GM13977 (cell line): ENCODE measurements at regions of chr10 and their contacts with region 1.

Region 1: GRCh38 chr10:100433253-100434240 is 29.3 kb upstream of the WNT8B start:
- DNase-seq: peak; percentile 82
- CTCF ChIP-seq: peak; percentile 98

Region 2: DNA sequence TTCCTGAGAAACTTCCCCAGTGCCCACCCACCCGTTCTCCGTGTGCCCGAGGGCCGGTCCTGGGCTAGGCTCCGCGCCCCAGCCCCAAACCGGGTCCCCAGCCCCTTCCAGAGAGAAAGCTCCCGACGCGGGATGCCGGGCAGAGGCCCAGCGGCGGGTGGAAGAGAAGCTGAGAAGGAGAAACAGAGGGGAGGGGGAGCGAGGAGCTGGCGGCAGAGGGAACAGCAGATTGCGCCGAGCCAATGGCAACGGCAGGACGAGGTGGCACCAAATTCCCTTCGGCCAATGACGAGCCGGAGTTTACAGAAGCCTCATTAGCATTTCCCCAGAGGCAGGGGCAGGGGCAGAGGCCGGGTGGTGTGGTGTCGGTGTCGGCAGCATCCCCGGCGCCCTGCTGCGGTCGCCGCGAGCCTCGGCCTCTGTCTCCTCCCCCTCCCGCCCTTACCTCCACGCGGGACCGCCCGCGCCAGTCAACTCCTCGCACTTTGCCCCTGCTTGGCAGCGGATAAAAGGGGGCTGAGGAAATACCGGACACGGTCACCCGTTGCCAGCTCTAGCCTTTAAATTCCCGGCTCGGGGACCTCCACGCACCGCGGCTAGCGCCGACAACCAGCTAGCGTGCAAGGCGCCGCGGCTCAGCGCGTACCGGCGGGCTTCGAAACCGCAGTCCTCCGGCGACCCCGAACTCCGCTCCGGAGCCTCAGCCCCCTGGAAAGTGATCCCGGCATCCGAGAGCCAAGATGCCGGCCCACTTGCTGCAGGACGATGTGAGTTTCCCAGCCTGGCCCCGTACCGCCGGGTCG is 86.6 kb before region 1 on chr10 and contains the start of gene SCD:
- in situ Hi-C with region 1: loop called (anchors 10 kb)
- DNase-seq: peak; percentile 95
- CTCF ChIP-seq: no peak

Region 3: DNA sequence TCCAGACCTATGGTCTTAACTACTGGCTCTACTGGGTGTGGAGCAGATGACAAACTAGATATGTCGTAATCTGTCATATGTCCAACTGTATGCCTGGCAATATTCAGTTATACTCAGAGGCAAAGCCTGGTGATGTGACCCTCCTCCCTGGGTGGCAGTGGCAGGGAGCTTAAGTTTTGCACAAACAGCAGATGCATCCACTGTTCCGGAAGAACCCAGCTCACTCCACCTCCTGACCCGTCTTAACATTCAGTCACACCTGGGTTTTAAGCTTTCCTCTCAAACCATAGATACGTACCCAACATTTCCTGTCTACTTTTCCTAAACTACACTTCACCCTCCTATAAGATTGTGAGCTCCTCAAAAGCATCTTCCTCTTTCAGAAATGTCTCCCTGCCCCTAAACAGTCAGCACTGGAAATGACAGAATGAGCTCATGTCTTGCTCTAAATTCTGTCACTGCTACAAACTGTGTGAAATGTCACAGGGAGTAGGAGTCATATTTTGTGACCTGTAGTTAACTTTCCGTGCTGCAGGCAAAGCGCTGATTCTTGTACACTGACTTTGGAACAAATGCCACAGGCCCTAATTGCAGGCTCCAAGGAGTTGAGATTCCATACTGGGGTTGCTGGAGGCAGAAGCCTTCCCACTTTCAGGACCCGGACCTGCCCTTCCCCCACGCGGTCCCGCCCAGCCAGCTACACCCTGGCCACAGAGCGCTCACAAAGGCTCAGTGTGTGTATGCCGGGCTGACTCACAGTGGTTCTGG is 62.6 kb before region 1 on chr10:
- in situ Hi-C with region 1: no loop called
- DNase-seq: no peak
- CTCF ChIP-seq: no peak

Region 4: GRCh38 chr10:100508691-100509150 is 75.2 kb after region 1 on chr10:
- in situ Hi-C with region 1: loop called (anchors 10 kb)
- DNase-seq: peak; percentile 57
- CTCF ChIP-seq: peak; percentile 46